ENCODE measurements at regions of chr1 and their contacts with region 1.

Region 1: GRCh38 chr1:17661546-17662157 is 93.5 kb upstream of the ACTL8 start:
- DNase-seq: peak; percentile 75
- ATAC-seq: peak; percentile 21

Region 2: DNA sequence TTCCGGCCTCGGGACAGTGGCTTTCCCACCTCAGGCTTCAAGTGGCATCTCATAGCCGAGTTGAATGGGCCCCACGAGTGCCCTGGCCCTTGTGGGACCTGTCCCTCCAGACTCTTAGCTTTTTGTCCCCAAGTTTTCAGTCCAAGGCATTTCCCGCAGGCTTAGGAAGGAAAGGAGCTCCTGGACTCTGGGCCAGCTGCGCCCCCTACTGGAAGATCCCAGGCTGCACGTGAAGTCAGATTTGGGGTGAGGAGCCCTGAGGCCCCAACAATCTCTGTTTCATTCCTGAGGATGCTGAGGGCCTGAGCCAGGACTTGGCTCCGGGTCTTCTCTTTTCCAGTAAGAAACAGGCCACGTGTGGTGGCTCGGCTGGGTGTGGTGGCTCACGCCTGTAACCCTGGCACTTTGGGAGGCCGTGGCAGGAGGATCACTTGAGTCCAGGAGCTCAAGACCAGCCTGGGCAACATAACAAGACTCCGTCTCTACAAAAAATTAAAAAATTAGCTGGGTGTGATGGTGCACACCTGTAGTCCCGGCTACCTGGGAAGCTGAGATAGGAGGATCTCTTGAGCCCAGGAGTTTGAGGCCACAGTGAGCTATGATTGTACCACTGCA is 54.7 kb before region 1 on chr1:
- intact Hi-C with region 1: no loop called
- DNase-seq: peak; percentile 86
- ATAC-seq: peak; percentile 56

Region 3: DNA sequence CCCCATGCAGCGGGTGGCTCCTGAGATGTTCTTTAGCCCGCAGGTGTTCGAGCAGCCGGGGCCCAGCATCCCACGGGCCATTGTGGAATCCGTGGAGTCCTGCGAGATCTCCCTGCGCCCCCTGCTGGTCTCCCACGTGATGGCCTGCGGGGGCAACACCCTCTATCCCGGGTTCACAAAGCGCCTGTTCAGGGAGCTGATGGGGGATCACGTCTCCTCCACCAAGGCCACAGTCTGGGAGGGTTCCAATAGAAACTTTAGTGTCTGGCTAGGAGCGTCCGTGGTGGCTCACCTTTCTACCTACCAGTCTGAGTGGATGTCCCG is 164.5 kb after region 1 on chr1:
- intact Hi-C with region 1: loop called (anchors 5 kb)
- DNase-seq: peak; percentile 59
- ATAC-seq: no peak

Region 4: GRCh38 chr1:17909634-17910033 is 248.0 kb after region 1 on chr1:
- intact Hi-C with region 1: loop called (anchors 5 kb)
- DNase-seq: no peak
- ATAC-seq: peak; percentile 28

Region 5: DNA sequence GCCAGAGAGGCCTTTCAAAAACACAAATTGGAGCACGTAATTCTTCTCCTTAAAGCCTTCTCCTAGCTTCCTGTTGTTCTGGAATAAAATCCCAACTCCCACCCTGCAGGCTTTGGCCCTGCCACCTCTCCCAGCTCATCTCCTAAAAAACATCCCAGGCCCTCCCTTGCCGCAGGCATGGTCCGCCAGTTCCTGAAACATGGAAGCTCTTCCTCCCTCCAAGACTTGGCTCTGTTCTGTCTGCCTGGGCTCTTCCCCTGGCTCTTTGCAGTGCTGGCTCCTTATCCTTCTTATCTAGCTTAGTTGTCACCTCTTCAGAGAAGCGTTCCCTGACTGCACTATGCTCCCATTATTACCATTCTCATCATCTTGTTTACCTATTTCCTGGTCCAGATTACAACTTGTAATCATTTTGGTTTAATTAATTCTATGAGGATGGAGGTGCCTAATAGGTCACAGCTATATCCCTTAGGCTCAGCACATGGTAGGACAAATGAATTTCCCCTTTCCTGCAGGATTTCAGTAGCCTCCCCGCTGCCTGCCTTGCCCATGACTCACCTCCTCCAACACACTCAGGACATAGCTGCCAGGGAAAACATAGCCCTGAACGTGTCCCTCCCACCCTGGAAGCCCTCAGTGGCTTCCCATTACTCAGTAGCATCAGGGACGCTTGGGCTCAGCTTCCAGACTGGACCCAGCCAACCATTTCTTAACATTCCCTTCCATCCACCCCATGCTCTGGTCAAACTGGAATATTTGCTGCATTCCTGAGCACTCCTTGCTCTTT is 430.2 kb after region 1 on chr1:
- intact Hi-C with region 1: loop called (anchors 10 kb)
- DNase-seq: no peak
- ATAC-seq: no peak

Measured in Right ventricle myocardium inferior (tissue), 1 donor.